KBM-7 (cell line): ENCODE measurements at regions of chr12 and their contacts with region 1.

Region 1: DNA sequence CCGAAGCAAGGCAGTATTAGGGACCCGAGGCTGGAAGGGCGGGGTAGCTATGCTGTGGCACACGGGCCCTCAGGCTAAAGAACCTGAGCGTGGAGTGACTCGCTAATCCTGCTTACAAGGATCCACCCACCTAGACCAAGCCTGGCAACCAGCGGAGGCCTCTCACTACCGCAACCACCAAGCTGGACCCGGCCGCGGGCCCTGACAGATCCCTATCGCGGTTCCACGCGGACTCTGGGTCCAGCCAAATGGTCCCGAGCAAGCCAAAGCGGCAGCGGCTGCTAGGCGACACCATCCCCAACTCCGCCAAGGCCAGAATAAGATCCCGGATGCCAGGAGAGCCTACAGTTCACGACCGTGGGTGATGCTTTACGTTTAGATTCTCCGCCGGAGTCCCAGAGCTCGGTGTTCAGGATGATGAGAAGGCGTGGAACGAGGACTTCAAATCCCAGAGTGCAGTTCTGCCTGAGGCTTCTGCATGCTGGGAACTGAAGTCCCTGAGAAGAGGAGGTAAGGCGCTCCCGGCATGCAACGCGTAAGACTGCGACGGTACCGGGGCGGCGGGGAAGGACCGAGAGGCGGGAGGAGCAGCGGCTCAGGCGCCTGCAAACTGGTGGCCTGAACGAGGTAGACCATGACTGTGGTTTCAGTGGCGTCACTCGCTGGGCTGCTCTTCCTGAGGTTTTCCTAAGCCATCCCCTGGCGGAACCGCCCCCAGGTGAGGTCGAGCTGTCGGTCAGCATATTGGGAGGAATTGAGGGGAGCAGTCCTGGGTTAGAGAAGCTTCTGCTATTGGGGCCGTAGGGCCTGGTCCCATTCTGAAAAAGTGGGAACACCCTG is at the starts of genes CEP290 and TMTC3:
- DNase-seq: peak; percentile 98

Region 2: DNA sequence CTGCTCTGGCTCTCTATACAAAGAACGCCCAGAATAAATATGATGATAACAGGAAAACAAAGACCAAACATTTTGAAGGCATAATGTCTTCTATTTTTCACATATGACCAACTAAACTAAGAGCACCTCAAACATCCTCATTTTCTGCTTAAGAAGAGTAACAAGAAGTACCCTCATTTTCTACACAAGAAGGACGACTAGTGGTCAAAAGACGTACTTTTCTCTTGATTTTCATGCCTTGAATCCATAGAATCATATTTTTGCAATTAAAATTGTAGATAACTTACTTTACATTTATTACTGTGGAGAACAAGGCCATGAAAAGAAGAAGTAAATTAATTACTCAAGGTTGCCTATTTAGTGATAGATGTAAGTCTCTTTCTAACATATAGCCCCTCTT is 851.7 kb after region 1 on chr12:
- in situ Hi-C with region 1: loop called (anchors 25 kb)
- DNase-seq: peak; percentile 77